ENCODE measurements at regions of chr7 and their contacts with region 1.

Region 1: DNA sequence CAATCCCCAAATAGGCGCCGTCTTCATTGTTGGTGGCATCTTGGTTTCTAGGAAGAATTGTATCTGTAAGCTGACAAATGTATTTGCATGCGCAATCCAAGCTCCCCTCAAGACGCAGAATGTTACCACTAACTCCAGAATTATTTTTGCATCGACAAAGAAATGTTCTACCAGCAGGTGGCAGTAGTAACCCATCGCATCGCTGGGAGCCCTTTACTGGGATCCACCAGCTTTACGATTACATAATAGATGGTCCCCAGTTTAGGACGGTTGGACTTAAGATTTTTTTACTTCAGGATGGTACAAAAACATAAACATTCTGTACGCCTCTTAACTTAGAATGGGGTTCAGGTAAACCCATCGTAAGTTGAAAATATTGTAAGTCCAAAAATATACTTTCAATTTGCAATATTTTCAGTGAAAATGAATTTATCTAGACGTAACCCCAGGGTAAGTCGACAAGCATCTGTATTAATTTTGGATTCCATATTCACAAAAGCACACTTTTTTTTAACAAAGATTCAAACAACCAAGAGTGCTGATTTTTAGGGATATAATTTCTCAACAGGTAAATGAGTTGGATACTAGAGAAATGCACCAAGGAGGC is 114.0 kb upstream of the COBL start:
- DNase-seq: peak; percentile 45
- H3K4me3 ChIP-seq: no peak overlapping the region
- H3K27ac ChIP-seq: no peak overlapping the region
- H3K4me1 ChIP-seq: no peaks in the 10 kb centered on the region
- H3K27me3 ChIP-seq: peaks cover 3% of the 10 kb centered on the region
- CTCF ChIP-seq: peak; percentile 80 to 84 (median 81)
- EP300 ChIP-seq: no peak
- POLR2A ChIP-seq: no peak

Region 2: DNA sequence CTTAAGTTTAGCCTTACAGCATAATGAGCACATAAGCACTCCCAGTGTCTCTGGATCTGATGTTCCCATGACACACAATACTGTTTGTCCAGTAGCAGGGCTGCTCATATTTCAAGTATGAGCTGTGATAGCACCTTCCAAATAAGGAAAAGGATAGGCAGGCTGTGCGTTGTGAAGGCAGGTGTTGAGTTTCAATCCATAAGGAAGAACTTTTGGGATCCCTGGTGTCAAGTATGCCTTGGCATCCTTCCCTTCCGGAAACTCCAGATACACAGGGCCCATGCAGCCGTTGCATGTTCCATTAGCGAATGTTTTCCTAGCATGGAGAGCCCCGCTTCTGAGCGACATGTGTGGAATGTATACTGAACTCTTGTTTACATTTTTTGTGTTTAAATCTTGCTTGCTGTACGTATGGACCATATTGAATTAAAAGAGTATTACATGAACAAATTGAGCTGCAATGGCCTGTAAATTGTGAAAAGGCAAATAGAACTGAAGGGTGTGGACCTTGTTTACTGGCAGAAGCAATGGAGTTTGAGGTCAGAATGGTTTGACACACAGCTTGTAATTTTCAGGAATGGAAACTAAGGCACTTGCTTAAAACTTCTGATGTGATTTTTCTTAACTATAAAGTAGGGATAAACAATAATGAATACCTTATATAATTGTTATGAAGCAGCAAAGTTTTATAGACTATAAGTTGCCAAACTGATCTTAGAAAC is 80.2 kb before region 1 on chr7:
- in situ Hi-C with region 1: no loop called
- intact Hi-C with region 1: no loop called
- DNase-seq: peak; percentile 59
- H3K4me3 ChIP-seq: no peak overlapping the region
- H3K27ac ChIP-seq: peak overlapping the region; percentile 12 to 63 (median 38)
- H3K4me1 ChIP-seq: peaks cover 0 to 15% (median 10%) of the 10 kb centered on the region in 4 donors
- H3K27me3 ChIP-seq: no peaks in the 10 kb centered on the region
- CTCF ChIP-seq: no peak
- EP300 ChIP-seq: no peak
- POLR2A ChIP-seq: no peak

Region 3: GRCh38 chr7:51606601-51607154 is 176.1 kb after region 1 on chr7:
- in situ Hi-C with region 1: no loop called
- intact Hi-C with region 1: no loop called
- DNase-seq: peak; percentile 68
- H3K4me3 ChIP-seq: no peak overlapping the region
- H3K27ac ChIP-seq: peak overlapping the region in 2 of 4 donors; percentile 56 to 58
- H3K4me1 ChIP-seq: peaks cover 1 to 18% (median 11%) of the 10 kb centered on the region in 4 donors
- H3K27me3 ChIP-seq: no peaks in the 10 kb centered on the region
- CTCF ChIP-seq: no peak
- EP300 ChIP-seq: peak; percentile 53
- POLR2A ChIP-seq: no peak

Region 4: DNA sequence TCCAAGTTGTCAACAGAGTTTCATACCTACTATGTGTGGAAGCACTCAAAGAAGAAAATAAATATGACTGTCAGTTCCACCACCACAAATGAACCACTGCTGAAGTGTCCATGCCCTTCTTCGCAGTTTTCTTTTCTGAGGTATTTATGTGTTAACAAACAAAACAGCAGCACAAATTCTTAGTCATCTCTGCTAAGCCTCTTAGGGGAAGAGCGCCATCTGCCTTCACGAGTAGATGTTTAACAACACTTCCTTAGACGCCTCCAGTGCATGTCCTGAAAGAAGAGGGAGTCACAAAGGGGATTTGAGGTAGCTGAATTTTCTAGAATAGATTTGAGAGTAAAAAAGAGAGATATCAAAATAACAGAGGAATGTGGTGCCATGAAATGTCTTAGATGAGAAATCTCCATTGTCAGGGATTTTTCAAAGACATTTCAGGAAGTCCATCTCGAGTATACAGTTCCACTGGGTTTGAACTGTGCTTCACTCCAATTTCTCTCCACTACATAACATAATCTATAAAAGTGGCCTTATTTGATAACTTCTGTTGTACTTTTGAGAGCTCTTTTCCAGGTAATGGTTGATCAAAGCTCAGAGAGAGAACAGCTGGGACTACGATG is 829.6 kb after region 1 on chr7:
- in situ Hi-C with region 1: loop called in 1 of 4 experiments (anchors 25 kb)
- intact Hi-C with region 1: no loop called
- DNase-seq: no peak
- H3K4me3 ChIP-seq: no peak overlapping the region
- H3K27ac ChIP-seq: no peak overlapping the region
- H3K4me1 ChIP-seq: no peaks in the 10 kb centered on the region
- H3K27me3 ChIP-seq: no peaks in the 10 kb centered on the region
- CTCF ChIP-seq: peak in 1 of 5 experiments; percentile 20
- EP300 ChIP-seq: no peak
- POLR2A ChIP-seq: no peak

Measured in transverse colon (tissue), 4 donors.